ENCODE measurements at regions of chr1 and their contacts with region 1.

Region 1: DNA sequence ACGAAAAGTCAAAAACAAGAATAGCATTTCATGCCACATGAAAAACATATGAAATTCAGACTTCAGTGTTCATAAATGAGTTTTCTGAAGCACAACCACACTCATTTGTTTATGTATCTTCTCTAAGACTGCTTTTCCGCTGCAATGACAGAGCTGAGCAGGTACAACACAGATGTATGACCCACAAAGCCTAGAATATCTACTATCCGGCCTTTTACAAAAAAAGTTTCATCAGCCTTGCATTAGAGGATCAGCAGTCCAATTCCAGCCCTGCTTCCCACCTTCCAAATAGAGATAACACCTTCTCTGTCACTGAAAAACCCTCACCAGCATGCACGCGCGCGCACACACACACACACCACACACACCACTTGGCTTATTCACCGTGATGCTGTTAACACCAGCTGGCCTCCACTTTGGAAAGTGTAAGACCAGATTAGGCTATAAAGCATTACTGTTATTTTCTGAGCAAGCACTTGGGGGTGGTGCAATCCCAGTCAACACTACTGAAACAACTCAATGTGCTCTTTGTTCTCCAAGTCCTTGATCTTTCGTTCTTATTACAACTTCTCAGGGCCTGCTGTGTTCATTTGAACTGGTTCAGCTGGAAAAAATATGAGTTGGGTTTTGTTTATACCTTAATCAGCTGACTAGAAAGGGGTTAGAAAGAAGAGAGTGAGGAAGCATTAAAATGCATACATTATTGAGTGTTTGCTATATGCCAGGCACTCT is 90.0 kb downstream of the GLUL start:
- DNase-seq: peak in 5 of 9 donors; percentile 17 to 31 (median 27)
- ATAC-seq: peak; percentile 26
- H3K4me3 ChIP-seq: no peak overlapping the region
- H3K4me3 Mint-ChIP-seq: no peak overlapping the region
- H3K27ac ChIP-seq: peak overlapping the region; percentile 20
- H3K27ac Mint-ChIP-seq: peak overlapping the region in 8 of 9 donors; percentile 15 to 94 (median 64)
- H3K4me1 ChIP-seq: peaks cover 0 to 6% of the 10 kb centered on the region in 2 donors
- H3K4me1 Mint-ChIP-seq: peaks cover 17 to 31% (median 28%) of the 10 kb centered on the region in 7 donors
- H3K27me3 ChIP-seq: no peaks in the 10 kb centered on the region
- H3K27me3 Mint-ChIP-seq: no peaks in the 10 kb centered on the region

Region 2: DNA sequence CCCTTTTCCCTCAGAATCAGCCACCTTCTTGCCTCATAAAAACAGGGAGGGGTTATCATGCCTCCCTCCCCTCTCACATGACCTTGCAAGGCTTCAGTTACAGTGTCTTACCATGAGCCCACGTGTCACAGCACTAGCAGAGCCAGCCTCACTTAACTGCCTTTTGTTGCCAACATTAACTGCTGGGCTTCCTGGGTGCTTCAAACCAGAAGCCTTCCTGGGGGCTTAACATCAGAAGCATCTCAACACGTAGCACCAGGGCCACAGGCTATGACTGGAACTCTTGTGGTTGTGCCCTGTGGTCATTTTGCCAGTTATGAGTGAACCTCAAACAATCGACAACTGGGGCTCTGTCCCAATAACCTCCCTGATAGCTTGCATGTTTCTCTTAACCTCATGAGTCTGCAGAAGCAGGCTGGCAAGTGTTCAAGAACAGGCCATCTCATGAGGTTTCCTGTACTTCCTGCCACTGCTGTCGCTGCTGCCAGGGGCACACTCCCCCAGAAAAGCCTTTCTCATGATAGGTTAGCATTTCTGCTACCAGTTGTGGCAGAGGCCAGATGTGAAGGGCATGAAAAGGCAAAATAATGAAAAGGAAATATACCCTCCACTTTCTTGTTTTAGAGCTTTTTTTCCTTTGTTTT is 42.3 kb before region 1 on chr1:
- CTCF ChIA-PET with region 1: no interaction called
- POLR2A ChIA-PET with region 1: no interaction called
- intact Hi-C with region 1: loop called in 1 of 2 experiments (anchors 5 kb)
- DNase-seq: peak; percentile 21 to 79 (median 65)
- ATAC-seq: peak; percentile 90
- H3K4me3 ChIP-seq: peak overlapping the region; percentile 2
- H3K4me3 Mint-ChIP-seq: peak overlapping the region; percentile 28 to 82 (median 75)
- H3K27ac ChIP-seq: peak overlapping the region; percentile 72
- H3K27ac Mint-ChIP-seq: peak overlapping the region; percentile 83 to 97 (median 91)
- H3K4me1 ChIP-seq: peaks cover 11 to 20% of the 10 kb centered on the region in 2 donors
- H3K4me1 Mint-ChIP-seq: peaks cover 23 to 50% (median 43%) of the 10 kb centered on the region in 7 donors
- H3K27me3 ChIP-seq: no peaks in the 10 kb centered on the region
- H3K27me3 Mint-ChIP-seq: no peaks in the 10 kb centered on the region

Region 3: GRCh38 chr1:182268669-182269068 is 33.0 kb before region 1 on chr1:
- CTCF ChIA-PET with region 1: no interaction called
- POLR2A ChIA-PET with region 1: no interaction called
- intact Hi-C with region 1: loop called in 1 of 2 experiments (anchors 5 kb)
- DNase-seq: no peak
- ATAC-seq: no peak
- H3K4me3 ChIP-seq: no peak overlapping the region
- H3K4me3 Mint-ChIP-seq: no peak overlapping the region
- H3K27ac ChIP-seq: no peak overlapping the region
- H3K27ac Mint-ChIP-seq: no peak overlapping the region
- H3K4me1 ChIP-seq: no peaks in the 10 kb centered on the region
- H3K4me1 Mint-ChIP-seq: peaks cover 0 to 5% (median 4%) of the 10 kb centered on the region in 7 donors
- H3K27me3 ChIP-seq: no peaks in the 10 kb centered on the region
- H3K27me3 Mint-ChIP-seq: peaks cover 0 to 5% (median 0%) of the 10 kb centered on the region in 5 donors